ENCODE measurements at regions of chr7 and their contacts with region 1.

Region 1: DNA sequence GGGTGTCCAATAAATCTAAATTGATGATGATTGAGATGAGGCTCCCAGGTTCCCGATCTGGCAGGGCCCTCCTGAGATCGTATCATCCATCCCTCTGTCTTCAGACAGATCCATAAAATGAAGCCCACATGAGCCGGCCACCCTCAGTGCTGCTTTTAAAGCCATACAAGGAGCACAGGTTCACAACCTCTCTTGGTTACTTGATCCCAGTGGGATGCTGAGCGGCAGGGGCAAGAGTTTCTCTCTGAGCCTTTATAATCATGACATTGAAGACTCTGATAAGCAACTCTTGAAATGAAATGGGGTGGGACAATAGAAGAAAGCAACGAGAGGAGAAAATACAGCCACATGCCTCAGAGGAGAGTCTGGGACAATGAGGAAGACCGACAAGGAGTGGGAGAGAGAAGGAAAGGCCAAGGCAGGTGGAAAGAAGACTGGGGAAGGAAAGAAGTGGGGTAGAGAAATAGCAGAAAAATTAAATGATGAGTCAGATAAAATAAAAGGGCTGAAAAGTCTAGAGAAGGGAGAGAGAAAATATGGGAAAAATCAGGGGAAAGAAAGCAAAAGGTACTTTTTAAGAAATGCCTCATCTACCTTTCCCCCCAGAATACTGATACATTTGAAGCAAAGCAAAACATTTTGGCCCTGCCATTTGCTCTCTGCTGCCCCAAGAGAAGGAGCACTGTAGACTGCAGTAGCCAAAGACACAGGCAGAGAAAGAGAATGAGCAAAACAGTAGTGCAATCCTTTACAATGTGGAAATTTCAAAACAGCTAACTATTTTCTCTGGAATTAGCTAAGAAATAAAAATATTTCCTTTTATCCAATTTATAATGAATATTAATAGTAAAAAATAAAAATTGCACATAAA is 14.6 kb downstream of the GBX1 start:
- DNase-seq: no peak
- ATAC-seq: no peak
- H3K4me3 Mint-ChIP-seq: no peak overlapping the region
- H3K27ac Mint-ChIP-seq: no peak overlapping the region
- H3K4me1 Mint-ChIP-seq: no peaks in the 10 kb centered on the region
- H3K27me3 Mint-ChIP-seq: peaks cover 27% of the 10 kb centered on the region
- CTCF ChIP-seq: no peak

Region 2: GRCh38 chr7:151172273-151173141 is 19.6 kb after region 1 on chr7:
- CTCF ChIA-PET with region 1: interaction called, 38 read pairs
- POLR2A ChIA-PET with region 1: no interaction called
- intact Hi-C with region 1: no loop called
- DNase-seq: peak; percentile 84
- ATAC-seq: peak; percentile 88
- H3K4me3 Mint-ChIP-seq: no peak overlapping the region
- H3K27ac Mint-ChIP-seq: no peak overlapping the region
- H3K4me1 Mint-ChIP-seq: peaks cover 3% of the 10 kb centered on the region
- H3K27me3 Mint-ChIP-seq: peaks cover 53% of the 10 kb centered on the region
- CTCF ChIP-seq: peak; percentile 100

Region 3: GRCh38 chr7:151185762-151186631 is 33.1 kb after region 1 on chr7:
- CTCF ChIA-PET with region 1: no interaction called
- POLR2A ChIA-PET with region 1: no interaction called
- intact Hi-C with region 1: no loop called
- DNase-seq: no peak
- ATAC-seq: no peak
- H3K4me3 Mint-ChIP-seq: no peak overlapping the region
- H3K27ac Mint-ChIP-seq: no peak overlapping the region
- H3K4me1 Mint-ChIP-seq: no peaks in the 10 kb centered on the region
- H3K27me3 Mint-ChIP-seq: peaks cover 2% of the 10 kb centered on the region
- CTCF ChIP-seq: no peak

Region 4: DNA sequence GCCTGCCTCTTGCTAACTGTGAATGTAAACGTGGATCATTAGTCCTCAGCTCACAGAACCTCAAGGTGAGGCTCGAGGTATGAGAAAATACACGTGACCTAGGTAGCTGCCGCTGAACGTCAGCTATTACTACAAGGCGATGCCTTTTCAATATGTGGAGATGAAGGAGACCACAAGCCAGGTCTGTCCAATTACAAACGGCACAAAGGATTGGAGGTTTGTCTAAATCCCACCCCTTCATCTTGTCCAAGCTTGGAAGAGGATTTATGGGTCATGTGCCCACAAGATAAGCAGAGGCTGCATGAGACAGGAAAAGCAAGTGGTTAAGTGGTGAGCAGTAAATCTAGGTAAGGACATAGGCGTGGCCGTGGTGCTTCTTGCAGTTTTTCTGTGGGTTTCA is 54.0 kb after region 1 on chr7:
- CTCF ChIA-PET with region 1: no interaction called
- POLR2A ChIA-PET with region 1: no interaction called
- intact Hi-C with region 1: no loop called
- DNase-seq: peak; percentile 16
- ATAC-seq: peak; percentile 64
- H3K4me3 Mint-ChIP-seq: no peak overlapping the region
- H3K27ac Mint-ChIP-seq: peak overlapping the region; percentile 12
- H3K4me1 Mint-ChIP-seq: peaks cover 20% of the 10 kb centered on the region
- H3K27me3 Mint-ChIP-seq: no peaks in the 10 kb centered on the region
- CTCF ChIP-seq: no peak